ENCODE measurements at regions of chr4 and their contacts with region 1.

Region 1: DNA sequence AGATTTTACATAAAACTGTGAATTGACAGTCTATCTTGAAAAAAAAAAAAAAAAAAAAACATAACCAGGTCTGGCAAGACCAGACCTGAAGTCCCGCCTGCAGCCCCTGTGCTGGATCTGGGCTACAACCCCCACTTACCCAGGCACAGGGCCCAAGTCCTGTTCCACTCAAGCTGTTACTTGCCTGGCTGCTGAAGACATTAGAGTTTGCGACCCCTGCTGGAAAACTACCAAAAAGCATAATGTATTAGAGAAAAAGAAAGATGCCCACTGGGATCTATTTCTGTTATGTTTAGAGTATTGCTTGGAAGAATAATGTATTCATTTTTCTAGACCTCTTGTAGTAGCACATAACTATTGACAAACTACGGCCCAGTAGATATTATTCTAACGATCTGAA is 4.7 kb downstream of the HS3ST1 start:
- DNase-seq: peak; percentile 42
- ATAC-seq: no peak
- H3K4me3 Mint-ChIP-seq: no peak overlapping the region
- H3K27ac Mint-ChIP-seq: no peak overlapping the region
- H3K4me1 Mint-ChIP-seq: peaks cover 14% of the 10 kb centered on the region
- H3K27me3 Mint-ChIP-seq: peaks cover 22% of the 10 kb centered on the region

Region 2: DNA sequence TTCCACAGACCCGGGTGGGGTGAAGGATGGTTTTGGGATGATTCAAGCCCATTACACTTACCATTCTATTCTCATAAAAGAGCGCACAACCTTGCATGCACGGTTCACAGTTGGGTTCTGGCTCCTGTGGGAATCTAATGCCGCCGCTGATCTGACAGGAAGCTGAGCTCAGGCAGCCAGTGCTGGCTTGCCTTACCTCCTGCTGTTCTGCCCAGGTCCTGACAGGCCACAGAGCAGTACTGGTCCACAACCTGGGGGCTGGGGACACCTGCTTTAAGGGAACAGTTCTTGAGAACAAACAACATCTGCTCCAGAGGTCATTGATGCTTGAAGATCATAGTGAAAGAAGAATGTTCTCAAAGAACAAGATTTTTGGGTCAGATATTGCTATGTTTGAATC is 12.7 kb after region 1 on chr4:
- CTCF ChIA-PET with region 1: interaction called, 10 read pairs
- POLR2A ChIA-PET with region 1: no interaction called
- DNase-seq: no peak
- ATAC-seq: no peak
- H3K4me3 Mint-ChIP-seq: no peak overlapping the region
- H3K27ac Mint-ChIP-seq: no peak overlapping the region
- H3K4me1 Mint-ChIP-seq: no peaks in the 10 kb centered on the region
- H3K27me3 Mint-ChIP-seq: peaks cover 11% of the 10 kb centered on the region